Activated naive CD4-positive, alpha-beta T cell treated with anti-CD3 and anti-CD28 coated beads for 36 hours (primary cell): ENCODE measurements at regions of chr1 and their contacts with region 1.

Region 1: GRCh38 chr1:186985889-186986491 is 157.2 kb downstream of the PLA2G4A start:
- DNase-seq: no peak
- H3K4me3 Mint-ChIP-seq: no peak overlapping the region
- H3K27ac Mint-ChIP-seq: no peak overlapping the region
- H3K4me1 Mint-ChIP-seq: no peaks in the 10 kb centered on the region
- H3K27me3 Mint-ChIP-seq: peaks cover 8% of the 10 kb centered on the region

Region 2: GRCh38 chr1:186155594-186155993 is 830.4 kb before region 1 on chr1:
- CTCF ChIA-PET with region 1: no interaction called
- intact Hi-C with region 1: loop called (anchors 10 kb)
- DNase-seq: peak; percentile 28
- H3K4me3 Mint-ChIP-seq: no peak overlapping the region
- H3K27ac Mint-ChIP-seq: no peak overlapping the region
- H3K4me1 Mint-ChIP-seq: no peaks in the 10 kb centered on the region
- H3K27me3 Mint-ChIP-seq: peaks cover 3% of the 10 kb centered on the region

Region 3: DNA sequence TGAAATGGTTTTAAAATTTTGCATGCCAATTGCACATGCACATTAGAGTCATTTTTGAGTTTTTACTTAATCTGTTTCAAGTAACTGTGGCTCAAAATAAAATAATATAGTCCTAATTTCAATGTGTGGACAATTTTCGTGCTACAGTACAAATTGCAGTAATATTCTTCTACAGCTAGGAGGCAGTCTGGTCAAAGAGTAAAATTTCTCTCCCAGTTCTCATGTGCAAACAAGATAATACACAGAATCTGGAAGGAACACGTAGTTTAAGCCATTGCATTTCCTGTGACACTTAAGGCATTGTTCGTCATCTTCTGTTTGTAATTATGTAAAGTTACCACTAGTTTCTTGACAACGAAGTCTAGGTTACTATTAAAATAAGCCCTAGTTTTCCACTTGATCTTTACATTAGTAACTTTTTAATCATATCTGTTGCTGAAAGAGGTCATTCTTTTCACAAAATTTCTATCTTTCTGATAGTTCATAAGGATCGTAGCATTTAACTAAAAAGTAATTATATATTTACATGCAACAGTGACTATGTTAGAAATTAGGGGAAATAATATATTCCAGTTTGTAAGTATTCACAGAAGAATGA is 581.4 kb before region 1 on chr1:
- CTCF ChIA-PET with region 1: interaction called, 3 read pairs
- intact Hi-C with region 1: loop called (anchors 1 kb)
- DNase-seq: no peak
- H3K4me3 Mint-ChIP-seq: no peak overlapping the region
- H3K27ac Mint-ChIP-seq: no peak overlapping the region
- H3K4me1 Mint-ChIP-seq: no peaks in the 10 kb centered on the region
- H3K27me3 Mint-ChIP-seq: no peaks in the 10 kb centered on the region

Region 4: DNA sequence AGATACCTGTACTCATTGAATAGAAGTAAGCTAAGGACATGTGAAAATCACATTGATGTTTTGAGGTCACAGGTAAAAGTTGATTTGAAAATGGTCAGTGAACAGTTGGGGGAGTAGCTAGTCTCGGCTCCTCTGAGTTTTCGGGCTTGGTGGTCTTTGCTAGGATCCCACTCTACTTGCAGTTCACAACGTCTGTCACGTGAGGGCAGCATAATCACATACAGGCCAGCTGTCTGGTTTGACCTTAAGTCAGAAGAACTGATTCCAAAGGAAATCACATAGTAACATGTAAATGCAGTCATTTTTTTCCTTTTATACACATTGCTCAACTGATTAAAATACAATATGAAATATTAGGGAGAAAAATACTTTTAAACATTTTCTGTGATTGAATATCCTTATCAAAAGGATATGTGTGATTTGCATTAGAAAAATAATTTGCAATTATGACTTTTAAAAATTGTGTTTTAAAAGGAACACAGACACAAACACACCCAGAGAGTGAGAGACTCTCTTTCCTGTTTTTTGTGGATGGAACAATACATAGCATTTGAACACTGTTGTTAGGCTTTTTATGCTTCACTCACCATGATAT is 503.2 kb before region 1 on chr1:
- CTCF ChIA-PET with region 1: interaction called, 8 read pairs
- intact Hi-C with region 1: loop called (anchors 1 kb)
- DNase-seq: peak; percentile 71
- H3K4me3 Mint-ChIP-seq: no peak overlapping the region
- H3K27ac Mint-ChIP-seq: no peak overlapping the region
- H3K4me1 Mint-ChIP-seq: no peaks in the 10 kb centered on the region
- H3K27me3 Mint-ChIP-seq: no peaks in the 10 kb centered on the region

Region 5: GRCh38 chr1:186605762-186606350 is 380.1 kb before region 1 on chr1:
- CTCF ChIA-PET with region 1: interaction called, 23 read pairs
- intact Hi-C with region 1: loop called (anchors 1 kb)
- DNase-seq: peak; percentile 56
- H3K4me3 Mint-ChIP-seq: no peak overlapping the region
- H3K27ac Mint-ChIP-seq: no peak overlapping the region
- H3K4me1 Mint-ChIP-seq: no peaks in the 10 kb centered on the region
- H3K27me3 Mint-ChIP-seq: peaks cover 35% of the 10 kb centered on the region

Region 6: DNA sequence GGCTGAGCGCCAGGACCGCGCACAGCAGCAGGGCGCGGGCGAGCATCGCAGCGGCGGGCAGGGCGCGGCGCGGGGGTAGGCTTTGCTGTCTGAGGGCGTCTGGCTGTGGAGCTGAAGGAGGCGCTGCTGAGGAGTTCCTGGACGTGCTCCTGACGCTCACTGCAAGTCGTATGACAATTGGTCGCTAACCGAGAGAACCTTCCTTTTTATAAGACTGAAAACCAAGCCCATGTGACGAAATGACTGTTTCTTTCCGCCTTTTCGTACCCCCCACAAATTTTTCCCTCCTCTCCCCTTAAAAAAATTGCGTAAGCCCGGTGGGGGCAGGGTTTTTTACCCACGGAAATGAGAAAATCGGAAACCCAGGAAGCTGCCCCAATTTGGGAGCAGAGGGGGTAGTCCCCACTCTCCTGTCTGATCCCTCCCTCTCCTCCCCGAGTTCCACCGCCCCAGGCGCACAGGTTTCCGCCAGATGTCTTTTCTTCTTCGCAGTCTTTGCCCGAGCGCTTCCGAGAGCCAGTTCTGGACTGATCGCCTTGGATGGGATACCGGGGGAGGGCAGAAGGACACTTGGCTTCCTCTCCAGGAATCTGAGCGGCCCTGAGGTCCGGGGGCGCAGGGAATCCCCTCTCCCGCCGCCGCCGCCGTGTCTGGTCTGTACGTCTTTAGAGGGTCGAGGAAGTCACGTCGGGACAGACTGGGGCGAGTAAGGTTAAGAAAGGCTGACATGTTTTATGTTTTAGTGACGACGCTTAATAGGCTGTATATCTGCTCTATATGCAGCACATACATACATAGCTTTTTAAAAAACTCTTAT is 305.5 kb before region 1 on chr1 and contains the start of gene PTGS2:
- CTCF ChIA-PET with region 1: interaction called, 7 read pairs
- intact Hi-C with region 1: loop called (anchors 2 kb)
- DNase-seq: peak; percentile 65
- H3K4me3 Mint-ChIP-seq: peak within 1 kb of the TSS; percentile 78
- H3K27ac Mint-ChIP-seq: no peak within 1 kb of the TSS
- H3K4me1 Mint-ChIP-seq: peaks cover 10% of the 10 kb centered on the region
- H3K27me3 Mint-ChIP-seq: peaks cover 52% of the 10 kb centered on the region
- total RNA-seq, gene PTGS2: 1.8 to 2.0 TPM

Region 7: GRCh38 chr1:186722711-186723309 is 263.2 kb before region 1 on chr1:
- CTCF ChIA-PET with region 1: no interaction called
- intact Hi-C with region 1: loop called (anchors 1 kb)
- DNase-seq: peak; percentile 25
- H3K4me3 Mint-ChIP-seq: no peak overlapping the region
- H3K27ac Mint-ChIP-seq: no peak overlapping the region
- H3K4me1 Mint-ChIP-seq: no peaks in the 10 kb centered on the region
- H3K27me3 Mint-ChIP-seq: no peaks in the 10 kb centered on the region